ENCODE measurements at regions of chr18 and their contacts with region 1.

Region 1: GRCh38 chr18:2994603-2995432 is 18.1 kb downstream of the LPIN2 start:
- DNase-seq: no peak
- H3K4me3 ChIP-seq: no peak overlapping the region
- H3K27ac ChIP-seq: no peak overlapping the region
- H3K4me1 ChIP-seq: peaks cover 5% of the 10 kb centered on the region
- H3K27me3 ChIP-seq: no peaks in the 10 kb centered on the region
- CTCF ChIP-seq: peak in 1 of 2 donors; percentile 25

Region 2: DNA sequence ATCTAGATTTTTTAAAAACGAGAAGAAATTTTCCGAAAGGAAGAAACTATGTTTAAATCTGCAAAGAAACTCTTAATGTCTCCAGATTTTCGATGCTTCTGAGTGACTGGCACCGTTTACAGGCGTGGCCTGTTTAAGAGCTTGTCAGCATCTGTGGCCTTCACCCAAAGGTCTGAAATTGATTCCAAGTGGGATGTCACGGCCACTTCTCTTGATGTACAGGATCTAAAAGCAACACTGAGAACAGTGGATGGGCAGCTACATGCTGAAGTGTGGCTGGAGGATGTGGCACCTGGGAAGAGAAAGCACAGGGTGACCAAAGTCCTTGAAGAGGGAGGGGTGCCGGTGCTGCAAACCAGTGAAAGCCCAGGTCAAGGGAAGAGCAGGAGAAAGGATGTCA is 120.1 kb before region 1 on chr18:
- CTCF ChIA-PET with region 1: no interaction called
- dilution Hi-C with region 1: no loop called
- in situ Hi-C with region 1: no loop called
- intact Hi-C with region 1: no loop called
- DNase-seq: no peak
- H3K4me3 ChIP-seq: no peak overlapping the region
- H3K27ac ChIP-seq: no peak overlapping the region
- H3K4me1 ChIP-seq: no peaks in the 10 kb centered on the region
- H3K27me3 ChIP-seq: no peaks in the 10 kb centered on the region
- CTCF ChIP-seq: no peak

Region 3: GRCh38 chr18:3012964-3013804 is 18.4 kb after region 1 on chr18 and contains the start of gene LPIN2:
- CTCF ChIA-PET with region 1: no interaction called
- dilution Hi-C with region 1: no loop called
- in situ Hi-C with region 1: no loop called
- intact Hi-C with region 1: loop called (anchors 1 kb)
- DNase-seq: peak; percentile 91
- H3K4me3 ChIP-seq: peak within 1 kb of the TSS; percentile 70 to 74 (median 72)
- H3K27ac ChIP-seq: peak within 1 kb of the TSS; percentile 51
- H3K4me1 ChIP-seq: peaks cover 18% of the 10 kb centered on the region
- H3K27me3 ChIP-seq: no peaks in the 10 kb centered on the region
- CTCF ChIP-seq: no peak
- total RNA-seq, gene LPIN2: 9.9 to 20.3 TPM

Region 4: GRCh38 chr18:3062798-3063680 is 68.2 kb after region 1 on chr18:
- CTCF ChIA-PET with region 1: no interaction called
- dilution Hi-C with region 1: no loop called
- in situ Hi-C with region 1: no loop called
- intact Hi-C with region 1: loop called (anchors 2 kb)
- DNase-seq: peak; percentile 21
- H3K4me3 ChIP-seq: no peak overlapping the region
- H3K27ac ChIP-seq: no peak overlapping the region
- H3K4me1 ChIP-seq: no peaks in the 10 kb centered on the region
- H3K27me3 ChIP-seq: no peaks in the 10 kb centered on the region
- CTCF ChIP-seq: peak; percentile 67 to 84

Region 5: GRCh38 chr18:3074087-3074486 is 79.3 kb after region 1 on chr18:
- CTCF ChIA-PET with region 1: no interaction called
- dilution Hi-C with region 1: no loop called
- in situ Hi-C with region 1: no loop called
- intact Hi-C with region 1: no loop called
- DNase-seq: no peak
- H3K4me3 ChIP-seq: no peak overlapping the region
- H3K27ac ChIP-seq: no peak overlapping the region
- H3K4me1 ChIP-seq: no peaks in the 10 kb centered on the region
- H3K27me3 ChIP-seq: no peaks in the 10 kb centered on the region
- CTCF ChIP-seq: no peak